ENCODE measurements at regions of chr1 and their contacts with region 1.

Region 1: DNA sequence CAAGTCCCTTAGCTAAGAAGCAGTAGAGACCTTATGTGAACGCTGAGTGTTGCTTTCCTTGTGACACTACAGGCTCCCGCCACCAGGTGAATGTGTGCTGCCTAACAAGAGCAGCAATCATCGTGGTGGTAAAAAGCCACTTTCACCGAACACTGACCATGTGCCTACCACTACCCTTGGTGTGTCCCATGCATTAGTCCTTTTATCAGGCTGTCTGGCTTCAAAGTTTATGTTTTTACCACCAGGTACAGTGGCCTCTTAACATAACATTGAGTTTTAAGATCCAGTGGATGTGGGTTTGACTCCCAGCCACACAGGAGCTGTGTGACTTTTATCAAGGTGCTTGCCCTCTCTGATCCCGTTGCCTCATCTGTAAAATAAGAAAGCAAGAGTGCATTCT is 1.7 kb downstream of the C1QB start:
- DNase-seq: no peak
- H3K4me3 ChIP-seq: peak overlapping the region; percentile 25 to 40 (median 27)
- H3K27ac ChIP-seq: no peak overlapping the region
- H3K4me1 ChIP-seq: no peaks in the 10 kb centered on the region
- H3K27me3 ChIP-seq: peaks cover 0 to 3% of the 10 kb centered on the region in 2 donors
- CTCF ChIP-seq: no peak
- POLR2A ChIP-seq: no peak

Region 2: GRCh38 chr1:22503721-22504410 is 150.8 kb before region 1 on chr1:
- intact Hi-C with region 1: no loop called
- DNase-seq: no peak
- H3K4me3 ChIP-seq: no peak overlapping the region
- H3K27ac ChIP-seq: no peak overlapping the region
- H3K4me1 ChIP-seq: no peaks in the 10 kb centered on the region
- H3K27me3 ChIP-seq: no peaks in the 10 kb centered on the region
- CTCF ChIP-seq: no peak
- POLR2A ChIP-seq: no peak

Region 3: DNA sequence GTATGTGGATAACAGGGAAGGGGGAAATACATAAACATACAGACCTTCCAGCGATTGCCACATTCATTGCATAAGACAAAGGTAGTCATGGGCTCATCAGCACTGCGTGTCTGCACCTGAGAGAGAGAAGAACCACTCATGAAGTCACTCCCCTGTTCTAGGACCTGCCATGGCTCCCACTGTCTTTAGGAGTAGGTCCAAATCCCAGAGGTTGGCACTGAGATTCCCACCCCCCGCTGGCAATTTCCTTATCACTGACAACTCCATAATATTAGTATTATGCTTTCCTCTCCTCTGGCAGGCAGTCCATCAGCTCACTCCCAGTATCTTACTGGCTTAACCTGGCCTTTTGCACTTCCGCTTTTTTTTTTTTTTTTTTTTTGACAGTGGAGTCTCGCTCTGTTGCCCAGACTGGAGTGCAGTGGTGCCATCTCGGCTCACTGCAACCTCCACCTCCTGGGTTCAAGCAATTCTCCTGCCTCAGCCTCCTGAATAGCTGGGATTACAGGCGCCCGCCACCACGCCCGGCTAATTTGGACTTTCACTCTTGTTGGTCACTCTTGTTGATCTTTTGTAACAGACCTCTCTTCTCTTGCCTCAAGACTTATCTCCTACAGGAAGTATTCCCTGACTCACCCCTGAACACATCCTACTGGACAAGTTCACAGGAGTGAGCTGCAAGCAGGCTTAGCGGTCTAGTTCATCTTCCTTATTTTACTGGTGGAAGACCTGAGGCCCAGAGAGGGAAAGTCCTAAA is 729.8 kb after region 1 on chr1:
- intact Hi-C with region 1: loop called (anchors 5 kb)
- DNase-seq: no peak
- H3K4me3 ChIP-seq: no peak overlapping the region
- H3K27ac ChIP-seq: peak overlapping the region; percentile 77 to 80
- H3K4me1 ChIP-seq: peaks cover 0 to 11% of the 10 kb centered on the region in 2 donors
- H3K27me3 ChIP-seq: no peaks in the 10 kb centered on the region
- CTCF ChIP-seq: no peak
- POLR2A ChIP-seq: no peak

Measured in breast epithelium (tissue), 4 donors.